ENCODE measurements at regions of chr13 and their contacts with region 1.

Region 1: DNA sequence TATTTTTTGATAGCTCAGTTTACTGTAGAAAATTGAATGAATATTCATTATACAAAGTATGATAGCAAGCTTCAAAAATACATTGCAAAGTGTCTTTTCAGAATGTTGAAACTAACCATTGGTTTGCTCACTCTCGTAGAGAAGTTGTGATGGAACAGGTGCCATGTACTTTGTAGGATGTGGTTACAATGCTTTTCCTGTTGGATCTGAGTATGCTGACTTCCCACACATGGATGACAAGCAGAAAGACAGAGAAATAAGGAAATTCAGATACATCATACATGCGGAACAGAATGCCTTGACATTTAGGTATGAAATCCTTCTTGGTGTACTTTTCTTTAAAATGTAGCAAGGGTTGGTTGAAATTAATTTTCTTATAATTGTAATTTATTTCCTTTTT is 30.5 kb downstream of the CDADC1 start:
- DNase-seq: no peak
- ATAC-seq: no peak
- H3K4me3 Mint-ChIP-seq: no peak overlapping the region
- H3K27ac Mint-ChIP-seq: no peak overlapping the region
- H3K4me1 Mint-ChIP-seq: no peaks in the 10 kb centered on the region
- H3K27me3 Mint-ChIP-seq: no peaks in the 10 kb centered on the region
- CTCF ChIP-seq: no peak

Region 2: DNA sequence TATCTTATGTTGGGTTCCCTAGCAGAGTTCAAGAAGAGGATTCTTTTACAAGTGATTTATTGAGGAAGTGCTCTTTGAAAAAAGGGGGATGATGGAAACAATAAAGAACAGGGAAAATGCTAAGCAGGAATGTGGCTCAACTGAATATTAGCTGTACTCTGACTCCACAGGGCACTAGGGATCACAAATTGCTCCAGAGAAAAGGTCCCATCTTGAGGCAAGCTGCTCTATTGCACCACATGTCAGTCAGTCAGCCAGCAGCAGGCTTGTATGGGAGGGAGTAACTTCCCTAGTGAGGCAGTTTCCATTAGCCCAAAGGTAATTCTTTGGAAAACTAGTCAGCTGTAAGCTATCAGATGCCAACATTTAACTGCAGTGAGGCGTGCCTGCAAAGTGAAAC is 375.8 kb before region 1 on chr13:
- CTCF ChIA-PET with region 1: no interaction called
- POLR2A ChIA-PET with region 1: no interaction called
- intact Hi-C with region 1: no loop called
- DNase-seq: no peak
- ATAC-seq: no peak
- H3K4me3 Mint-ChIP-seq: no peak overlapping the region
- H3K27ac Mint-ChIP-seq: no peak overlapping the region
- H3K4me1 Mint-ChIP-seq: peaks cover 3% of the 10 kb centered on the region
- H3K27me3 Mint-ChIP-seq: peaks cover 29% of the 10 kb centered on the region
- CTCF ChIP-seq: no peak

Region 3: GRCh38 chr13:48913827-48914226 is 364.4 kb before region 1 on chr13:
- CTCF ChIA-PET with region 1: no interaction called
- POLR2A ChIA-PET with region 1: no interaction called
- intact Hi-C with region 1: no loop called
- DNase-seq: no peak
- ATAC-seq: no peak
- H3K4me3 Mint-ChIP-seq: no peak overlapping the region
- H3K27ac Mint-ChIP-seq: no peak overlapping the region
- H3K4me1 Mint-ChIP-seq: no peaks in the 10 kb centered on the region
- H3K27me3 Mint-ChIP-seq: peaks cover 6% of the 10 kb centered on the region
- CTCF ChIP-seq: no peak

Region 4: GRCh38 chr13:49098771-49099512 is 179.3 kb before region 1 on chr13:
- CTCF ChIA-PET with region 1: interaction called, 11 read pairs
- POLR2A ChIA-PET with region 1: no interaction called
- intact Hi-C with region 1: no loop called
- DNase-seq: peak; percentile 7
- ATAC-seq: no peak
- H3K4me3 Mint-ChIP-seq: no peak overlapping the region
- H3K27ac Mint-ChIP-seq: no peak overlapping the region
- H3K4me1 Mint-ChIP-seq: peaks cover 15% of the 10 kb centered on the region
- H3K27me3 Mint-ChIP-seq: no peaks in the 10 kb centered on the region
- CTCF ChIP-seq: peak; percentile 31

Region 5: DNA sequence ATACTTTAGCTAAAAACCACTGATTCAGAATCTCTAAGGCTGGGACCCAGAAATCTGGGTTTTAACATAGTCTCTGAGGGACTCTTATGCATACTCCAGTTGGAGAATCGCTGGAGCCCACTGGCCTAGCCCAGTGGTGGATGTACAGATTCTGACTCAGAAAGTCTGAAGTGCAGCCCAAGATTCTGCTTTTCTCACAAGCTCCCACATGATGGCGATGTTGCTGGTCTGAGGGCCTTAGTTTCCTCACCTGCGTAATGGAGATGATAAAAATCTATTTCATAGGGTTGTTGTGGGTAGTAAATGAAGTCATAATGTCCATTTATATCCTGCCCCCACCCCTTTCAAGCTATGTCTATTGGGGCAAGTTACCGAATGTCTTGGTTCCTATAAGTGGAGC is 38.2 kb before region 1 on chr13:
- CTCF ChIA-PET with region 1: interaction called, 48 read pairs
- POLR2A ChIA-PET with region 1: no interaction called
- intact Hi-C with region 1: no loop called
- DNase-seq: peak; percentile 68
- ATAC-seq: peak; percentile 98
- H3K4me3 Mint-ChIP-seq: no peak overlapping the region
- H3K27ac Mint-ChIP-seq: no peak overlapping the region
- H3K4me1 Mint-ChIP-seq: peaks cover 2% of the 10 kb centered on the region
- H3K27me3 Mint-ChIP-seq: no peaks in the 10 kb centered on the region
- CTCF ChIP-seq: peak; percentile 67

Region 6: DNA sequence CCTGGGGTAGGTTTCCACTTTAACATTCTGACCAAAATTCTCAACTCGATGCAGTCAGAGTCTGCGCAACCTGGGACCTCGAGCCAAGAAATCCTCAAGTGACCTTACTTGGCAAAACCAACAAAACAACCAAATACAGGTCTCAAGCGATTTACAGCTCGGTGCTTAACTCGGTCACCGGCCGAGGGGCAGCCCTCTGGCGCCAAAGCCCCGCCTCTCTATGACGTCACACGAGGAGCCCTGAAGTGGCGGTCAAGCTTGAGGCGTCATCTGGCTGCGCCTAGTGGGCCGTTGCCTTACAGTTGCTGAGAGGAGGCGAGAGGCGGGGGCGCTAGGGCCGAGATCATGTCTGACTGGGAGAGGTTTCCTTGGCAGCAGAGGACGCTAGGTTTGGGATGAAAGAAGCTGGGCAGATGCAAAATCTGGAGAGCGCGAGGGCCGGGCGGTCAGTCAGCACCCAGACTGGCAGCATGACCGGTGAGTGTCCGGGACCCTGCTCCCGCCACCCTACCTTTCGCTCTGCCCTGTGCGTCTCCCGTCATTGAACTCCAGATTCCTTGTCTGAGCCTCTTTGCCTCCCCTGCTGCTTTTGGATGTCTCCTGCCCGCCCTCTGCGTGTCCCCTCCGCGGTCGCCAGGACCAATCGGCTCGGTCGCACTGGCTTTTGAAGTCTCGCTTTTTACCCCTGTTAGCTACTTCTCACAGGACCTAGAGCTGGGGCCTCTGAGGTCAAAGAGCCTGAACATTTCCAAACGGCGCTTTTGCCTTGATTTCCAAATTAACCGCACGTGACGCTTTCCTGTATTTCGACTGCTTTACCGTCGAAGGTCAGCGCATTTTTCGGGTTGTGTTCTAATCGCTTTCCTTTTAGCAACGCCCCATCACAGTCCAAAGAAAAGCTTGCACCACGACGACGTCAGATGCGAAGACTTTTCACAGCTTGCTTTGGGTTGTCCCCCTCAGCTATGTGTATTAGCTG is 30.3 kb before region 1 on chr13 and contains the start of gene CDADC1:
- CTCF ChIA-PET with region 1: interaction called, 48 read pairs
- POLR2A ChIA-PET with region 1: no interaction called
- intact Hi-C with region 1: no loop called
- DNase-seq: peak; percentile 98
- ATAC-seq: peak; percentile 94
- H3K4me3 Mint-ChIP-seq: peak within 1 kb of the TSS; percentile 90
- H3K27ac Mint-ChIP-seq: peak within 1 kb of the TSS; percentile 97
- H3K4me1 Mint-ChIP-seq: peaks cover 32% of the 10 kb centered on the region
- H3K27me3 Mint-ChIP-seq: no peaks in the 10 kb centered on the region
- CTCF ChIP-seq: no peak
- total RNA-seq, gene CDADC1: 8.6 to 9.0 TPM

Region 7: GRCh38 chr13:49256841-49257240 is 21.4 kb before region 1 on chr13:
- CTCF ChIA-PET with region 1: interaction called, 12 read pairs
- POLR2A ChIA-PET with region 1: no interaction called
- intact Hi-C with region 1: no loop called
- DNase-seq: no peak
- ATAC-seq: no peak
- H3K4me3 Mint-ChIP-seq: no peak overlapping the region
- H3K27ac Mint-ChIP-seq: no peak overlapping the region
- H3K4me1 Mint-ChIP-seq: peaks cover 36% of the 10 kb centered on the region
- H3K27me3 Mint-ChIP-seq: no peaks in the 10 kb centered on the region
- CTCF ChIP-seq: no peak

Region 8: GRCh38 chr13:49265822-49266221 is 12.4 kb before region 1 on chr13:
- CTCF ChIA-PET with region 1: interaction called, 13 read pairs
- POLR2A ChIA-PET with region 1: no interaction called
- intact Hi-C with region 1: no loop called
- DNase-seq: no peak
- ATAC-seq: no peak
- H3K4me3 Mint-ChIP-seq: no peak overlapping the region
- H3K27ac Mint-ChIP-seq: no peak overlapping the region
- H3K4me1 Mint-ChIP-seq: no peaks in the 10 kb centered on the region
- H3K27me3 Mint-ChIP-seq: no peaks in the 10 kb centered on the region
- CTCF ChIP-seq: no peak

Region 9: GRCh38 chr13:49295244-49295643 is 17.0 kb after region 1 on chr13:
- CTCF ChIA-PET with region 1: interaction called, 14 read pairs
- POLR2A ChIA-PET with region 1: no interaction called
- intact Hi-C with region 1: no loop called
- DNase-seq: no peak
- ATAC-seq: no peak
- H3K4me3 Mint-ChIP-seq: no peak overlapping the region
- H3K27ac Mint-ChIP-seq: no peak overlapping the region
- H3K4me1 Mint-ChIP-seq: peaks cover 9% of the 10 kb centered on the region
- H3K27me3 Mint-ChIP-seq: no peaks in the 10 kb centered on the region
- CTCF ChIP-seq: no peak

Region 10: DNA sequence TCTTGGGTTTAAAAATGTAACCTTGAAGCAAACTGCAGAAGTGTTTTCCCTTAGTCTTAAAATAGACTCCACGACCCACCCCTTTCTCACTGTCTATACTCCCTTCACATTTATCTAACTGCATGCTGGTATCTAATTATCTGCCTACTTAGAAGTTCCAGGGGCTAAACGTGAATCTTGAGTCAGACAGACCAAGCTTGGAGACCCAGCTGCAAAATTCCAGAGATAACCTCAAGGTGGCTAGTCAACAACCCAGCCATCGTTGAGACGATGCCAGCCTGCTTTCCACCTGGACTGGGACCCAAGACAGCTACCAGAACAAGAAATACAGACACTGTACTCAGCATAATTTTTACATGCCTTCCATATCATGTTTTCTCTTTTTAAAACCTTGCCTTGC is 51.6 kb after region 1 on chr13:
- CTCF ChIA-PET with region 1: no interaction called
- POLR2A ChIA-PET with region 1: no interaction called
- intact Hi-C with region 1: no loop called
- DNase-seq: no peak
- ATAC-seq: no peak
- H3K4me3 Mint-ChIP-seq: no peak overlapping the region
- H3K27ac Mint-ChIP-seq: no peak overlapping the region
- H3K4me1 Mint-ChIP-seq: no peaks in the 10 kb centered on the region
- H3K27me3 Mint-ChIP-seq: no peaks in the 10 kb centered on the region
- CTCF ChIP-seq: no peak

Measured in activated CD8-positive, alpha-beta T cell treated with anti-CD3 and anti-CD28 coated beads for 36 hours (primary cell).